AG04450 (cell line): ENCODE measurements at regions of chr5 and their contacts with region 1.

Region 1: DNA sequence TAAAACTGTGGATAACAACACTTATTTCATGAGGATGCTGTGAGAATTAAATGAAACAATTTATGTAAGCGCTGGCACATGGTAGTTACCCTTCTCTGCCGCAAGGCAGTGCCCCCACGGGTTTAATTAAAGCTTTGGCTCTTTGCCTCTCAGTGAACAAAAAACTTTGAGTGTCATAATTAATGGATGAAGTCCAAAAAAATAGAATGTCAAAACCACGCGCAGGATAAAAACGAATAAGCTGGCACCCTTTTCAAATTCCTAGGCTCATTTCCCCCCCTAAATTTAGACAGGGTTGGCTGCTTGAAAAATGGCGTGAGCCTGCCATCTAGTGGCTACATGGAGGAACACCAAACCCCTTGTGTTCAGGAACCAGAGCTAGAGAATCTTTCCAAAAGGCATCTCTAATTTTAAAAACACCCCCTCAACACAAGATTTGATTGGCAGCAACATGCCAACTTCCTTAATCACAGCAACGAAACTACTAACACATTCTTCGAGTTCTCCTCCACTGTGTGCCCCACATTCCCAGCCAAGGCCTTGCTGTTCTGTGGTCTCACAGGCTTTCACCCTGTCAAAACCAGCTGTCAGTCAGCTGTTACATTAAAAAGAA is 29.0 kb upstream of the CCNG1 start:
- DNase-seq: peak; percentile 24
- H3K4me3 ChIP-seq: no peak overlapping the region
- H3K27ac ChIP-seq: no peak overlapping the region
- H3K27me3 ChIP-seq: no peaks in the 10 kb centered on the region
- CTCF ChIP-seq: peak; percentile 94

Region 2: DNA sequence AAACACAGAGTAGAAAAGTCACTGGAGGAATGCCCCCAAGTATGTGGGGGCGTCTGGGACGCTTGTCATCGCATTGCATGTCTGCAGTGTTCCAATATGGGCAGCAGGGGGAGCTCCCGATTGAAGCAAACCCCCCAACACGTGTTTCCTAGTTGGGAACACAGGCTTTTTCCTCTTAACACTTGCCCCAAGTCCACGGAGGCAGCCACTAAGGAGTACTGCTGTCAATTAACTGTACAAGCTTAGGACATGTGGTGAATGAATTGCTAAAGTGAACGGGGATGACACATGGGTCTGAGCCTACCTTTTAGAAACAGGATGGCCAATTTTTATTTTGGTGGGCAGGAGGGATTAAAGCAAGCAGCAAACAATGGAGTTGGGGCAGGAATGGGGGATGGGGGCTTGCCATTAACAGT is 1864.1 kb before region 1 on chr5:
- CTCF ChIA-PET with region 1: interaction called, 23 read pairs
- POLR2A ChIA-PET with region 1: no interaction called
- DNase-seq: no peak
- H3K4me3 ChIP-seq: no peak overlapping the region
- H3K27ac ChIP-seq: no peak overlapping the region
- H3K27me3 ChIP-seq: peaks cover 3% of the 10 kb centered on the region
- CTCF ChIP-seq: peak; percentile 60

Region 3: DNA sequence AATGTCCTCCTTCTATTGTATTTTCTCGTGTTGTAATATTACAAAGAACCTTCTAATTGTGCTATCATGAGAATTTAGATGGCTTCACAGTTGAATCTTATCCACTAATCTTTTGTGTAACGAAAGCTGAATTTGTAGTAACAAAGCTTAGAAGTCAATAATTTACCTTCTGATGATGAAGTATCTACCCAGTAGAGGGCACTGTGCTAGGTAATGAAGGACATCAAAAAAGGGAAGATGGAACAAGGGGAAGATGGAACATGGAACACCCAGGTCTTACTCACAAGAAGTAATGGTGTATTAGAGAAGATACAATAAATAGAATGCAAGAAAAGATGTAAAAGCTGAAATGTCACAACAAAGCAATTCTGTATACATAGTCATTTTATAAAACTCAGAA is 102.0 kb before region 1 on chr5:
- CTCF ChIA-PET with region 1: interaction called, 13 read pairs
- POLR2A ChIA-PET with region 1: no interaction called
- DNase-seq: no peak
- H3K4me3 ChIP-seq: no peak overlapping the region
- H3K27ac ChIP-seq: no peak overlapping the region
- H3K27me3 ChIP-seq: no peaks in the 10 kb centered on the region
- CTCF ChIP-seq: 0 out of 2 replicates have a peak, but pooled peaks have one; percentile 14

Region 4: DNA sequence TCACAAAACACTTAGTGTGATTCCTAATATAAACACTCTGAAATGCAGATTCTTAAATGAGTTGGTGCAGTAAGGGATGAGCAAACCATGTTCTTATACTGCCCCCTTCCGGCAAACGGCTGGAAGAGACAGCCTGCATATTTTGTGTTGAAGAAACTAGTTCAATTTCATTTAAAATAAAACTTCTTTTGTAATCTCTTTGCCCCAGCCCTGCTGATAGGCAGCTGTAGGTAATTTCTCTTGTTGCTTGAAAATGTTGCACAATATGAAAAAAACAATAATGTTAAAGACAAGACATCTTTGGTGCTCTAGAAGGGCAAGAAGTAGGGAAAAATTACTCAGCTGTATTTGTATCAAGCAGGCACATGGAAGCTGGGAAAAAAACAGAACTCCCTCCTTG is 60.7 kb before region 1 on chr5:
- CTCF ChIA-PET with region 1: interaction called, 23 read pairs
- POLR2A ChIA-PET with region 1: no interaction called
- DNase-seq: peak; percentile 8
- H3K4me3 ChIP-seq: no peak overlapping the region
- H3K27ac ChIP-seq: no peak overlapping the region
- H3K27me3 ChIP-seq: no peaks in the 10 kb centered on the region
- CTCF ChIP-seq: peak; percentile 73

Region 5: GRCh38 chr5:163379298-163380155 is 28.9 kb before region 1 on chr5:
- CTCF ChIA-PET with region 1: interaction called, 12 read pairs
- POLR2A ChIA-PET with region 1: no interaction called
- DNase-seq: peak; percentile 20
- H3K4me3 ChIP-seq: no peak overlapping the region
- H3K27ac ChIP-seq: no peak overlapping the region
- H3K27me3 ChIP-seq: no peaks in the 10 kb centered on the region
- CTCF ChIP-seq: no peak

Region 6: DNA sequence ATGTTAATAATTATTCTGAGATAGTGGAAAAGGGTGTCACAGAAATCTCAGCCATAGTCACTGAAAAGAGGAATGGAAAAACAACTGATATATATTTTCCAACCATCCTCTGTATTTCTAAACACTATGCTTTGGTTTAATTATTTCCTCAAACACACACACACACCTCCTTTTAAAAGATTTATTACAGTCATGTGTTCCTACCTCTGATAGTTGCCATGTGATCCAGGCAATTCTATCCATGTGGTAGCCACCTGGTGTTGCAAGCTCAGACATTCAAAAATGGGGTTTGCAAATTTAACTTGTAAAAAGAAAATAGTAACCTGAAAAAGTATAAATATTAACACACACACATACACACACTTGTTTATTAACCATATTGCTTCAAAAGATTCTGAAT is 11.1 kb before region 1 on chr5:
- CTCF ChIA-PET with region 1: interaction called, 20 read pairs
- POLR2A ChIA-PET with region 1: no interaction called
- DNase-seq: no peak
- H3K4me3 ChIP-seq: no peak overlapping the region
- H3K27ac ChIP-seq: no peak overlapping the region
- H3K27me3 ChIP-seq: no peaks in the 10 kb centered on the region
- CTCF ChIP-seq: no peak

Region 7: GRCh38 chr5:163421673-163422072 is 13.3 kb after region 1 on chr5:
- CTCF ChIA-PET with region 1: interaction called, 14 read pairs
- POLR2A ChIA-PET with region 1: no interaction called
- DNase-seq: no peak
- H3K4me3 ChIP-seq: no peak overlapping the region
- H3K27ac ChIP-seq: no peak overlapping the region
- H3K27me3 ChIP-seq: no peaks in the 10 kb centered on the region
- CTCF ChIP-seq: no peak